Testis (tissue), 5 donors: ENCODE measurements at regions of chr2 and their contacts with region 1.

Region 1: DNA sequence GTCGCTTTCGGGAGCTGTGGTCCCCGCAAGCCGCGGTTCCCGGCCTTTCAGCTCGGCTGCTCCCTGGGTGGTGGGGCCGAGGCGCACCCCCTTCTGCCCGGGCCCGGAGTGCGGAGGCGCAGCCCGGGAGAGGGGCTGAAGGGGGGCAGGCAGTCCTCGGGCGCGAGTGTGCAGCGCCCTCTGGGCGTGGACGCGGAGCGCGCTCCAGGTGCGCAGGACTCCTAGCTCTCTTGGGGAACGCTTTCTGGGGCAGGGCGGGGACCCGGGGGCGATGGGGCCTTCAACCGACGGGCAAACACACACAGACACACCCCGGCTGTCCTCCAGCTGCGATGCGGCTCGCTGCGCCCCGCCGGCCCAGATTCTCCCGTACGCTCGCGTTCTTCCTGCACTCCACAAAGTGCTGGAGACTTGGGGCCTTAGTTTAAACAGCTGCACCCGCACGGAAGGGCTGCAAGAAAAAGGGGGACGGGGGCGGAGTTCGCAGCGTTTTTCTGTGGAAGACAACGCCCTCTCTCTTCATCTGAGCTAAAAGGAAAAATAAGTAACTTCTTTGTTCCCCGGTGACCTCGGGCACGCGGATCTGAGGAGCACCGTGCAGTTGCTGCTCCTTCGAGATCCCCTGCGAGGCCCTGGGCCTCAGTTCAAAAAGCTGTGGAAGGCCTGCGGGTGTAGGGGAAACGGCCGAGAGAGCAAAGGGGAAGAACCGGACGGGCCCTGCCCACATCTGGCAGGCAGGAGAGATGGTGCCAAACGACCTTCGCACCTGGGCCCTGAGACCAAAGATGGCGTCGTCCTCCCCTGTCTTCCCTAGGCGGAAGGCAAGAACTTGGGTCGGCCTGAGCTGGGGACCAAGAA is 593 bp upstream of the SDC1 start:
- DNase-seq: peak; percentile 60
- H3K4me3 ChIP-seq: peak overlapping the region; percentile 51 to 61
- H3K27ac ChIP-seq: peak overlapping the region; percentile 53 to 56
- H3K4me1 ChIP-seq: peaks cover 10% of the 10 kb centered on the region
- H3K27me3 ChIP-seq: no peaks in the 10 kb centered on the region
- CTCF ChIP-seq: peak in 2 of 3 experiments; percentile 32 to 47
- POLR2A ChIP-seq: no peak

Region 2: GRCh38 chr2:20135631-20136050 is 89.9 kb before region 1 on chr2:
- intact Hi-C with region 1: loop called (anchors 10 kb)
- DNase-seq: peak; percentile 81
- H3K4me3 ChIP-seq: no peak overlapping the region
- H3K27ac ChIP-seq: no peak overlapping the region
- H3K4me1 ChIP-seq: peaks cover 12% of the 10 kb centered on the region
- H3K27me3 ChIP-seq: no peaks in the 10 kb centered on the region
- CTCF ChIP-seq: peak; percentile 55 to 65 (median 62)
- POLR2A ChIP-seq: no peak

Region 3: GRCh38 chr2:20172273-20173055 is 53.1 kb before region 1 on chr2:
- intact Hi-C with region 1: no loop called
- DNase-seq: no peak
- H3K4me3 ChIP-seq: no peak overlapping the region
- H3K27ac ChIP-seq: no peak overlapping the region
- H3K4me1 ChIP-seq: no peaks in the 10 kb centered on the region
- H3K27me3 ChIP-seq: no peaks in the 10 kb centered on the region
- CTCF ChIP-seq: no peak
- POLR2A ChIP-seq: no peak